ENCODE measurements at regions of chr3 and their contacts with region 1.

Region 1: DNA sequence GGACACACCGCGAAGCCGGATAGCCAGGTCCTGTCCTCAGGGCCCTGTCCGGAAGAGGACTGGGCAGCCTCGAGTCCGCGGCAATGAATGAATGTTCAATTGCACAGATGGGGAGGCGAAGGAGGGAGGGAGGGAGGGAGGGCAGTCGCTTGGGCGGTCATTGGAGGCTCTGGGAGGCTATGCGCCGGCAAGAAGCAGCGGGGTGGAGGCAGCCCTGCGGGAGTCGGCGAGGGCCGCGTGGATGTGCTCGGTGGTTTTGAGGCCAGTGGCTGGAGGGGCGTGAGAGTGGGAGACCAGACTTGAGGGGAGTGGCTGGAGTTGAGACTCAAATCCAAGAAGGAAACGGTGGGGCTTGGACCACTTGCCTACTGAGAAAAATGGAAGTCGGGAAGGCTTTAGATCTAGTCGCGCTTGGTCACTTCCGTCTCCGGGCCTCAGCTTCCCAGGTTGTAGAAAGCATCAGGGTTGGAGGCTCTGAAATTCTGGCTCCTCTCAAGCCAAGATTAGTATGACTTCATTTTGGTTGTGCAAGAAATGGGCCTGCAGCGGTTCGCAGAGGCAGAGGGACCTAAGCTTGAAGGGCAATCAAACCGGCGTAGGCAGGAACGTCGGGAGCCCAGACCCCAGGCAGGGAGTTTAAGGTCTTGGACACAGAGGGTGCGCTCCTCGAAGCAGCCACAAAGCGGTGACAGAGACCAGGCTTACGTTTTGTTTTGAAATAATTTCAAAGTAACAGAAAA is 21.1 kb upstream of the PLXND1 start:
- DNase-seq: peak; percentile 83
- H3K4me3 Mint-ChIP-seq: peak overlapping the region; percentile 92
- H3K27ac Mint-ChIP-seq: peak overlapping the region; percentile 65
- H3K4me1 Mint-ChIP-seq: peaks cover 10% of the 10 kb centered on the region
- H3K27me3 Mint-ChIP-seq: no peaks in the 10 kb centered on the region

Region 2: GRCh38 chr3:129490242-129491045 is 137.2 kb before region 1 on chr3:
- CTCF ChIA-PET with region 1: interaction called, 5 read pairs
- intact Hi-C with region 1: loop called (anchors 1 kb)
- DNase-seq: peak; percentile 67
- H3K4me3 Mint-ChIP-seq: no peak overlapping the region
- H3K27ac Mint-ChIP-seq: no peak overlapping the region
- H3K4me1 Mint-ChIP-seq: no peaks in the 10 kb centered on the region
- H3K27me3 Mint-ChIP-seq: no peaks in the 10 kb centered on the region

Region 3: GRCh38 chr3:129606636-129607390 is 20.8 kb before region 1 on chr3 and contains the start of gene PLXND1:
- CTCF ChIA-PET with region 1: interaction called, 3 read pairs
- intact Hi-C with region 1: loop called (anchors 1 kb)
- DNase-seq: peak; percentile 27
- H3K4me3 Mint-ChIP-seq: peak within 1 kb of the TSS; percentile 77
- H3K27ac Mint-ChIP-seq: peak within 1 kb of the TSS; percentile 6
- H3K4me1 Mint-ChIP-seq: peaks cover 7% of the 10 kb centered on the region
- H3K27me3 Mint-ChIP-seq: peaks cover 19% of the 10 kb centered on the region
- total RNA-seq, gene PLXND1: 5.1 to 6.2 TPM

Region 4: DNA sequence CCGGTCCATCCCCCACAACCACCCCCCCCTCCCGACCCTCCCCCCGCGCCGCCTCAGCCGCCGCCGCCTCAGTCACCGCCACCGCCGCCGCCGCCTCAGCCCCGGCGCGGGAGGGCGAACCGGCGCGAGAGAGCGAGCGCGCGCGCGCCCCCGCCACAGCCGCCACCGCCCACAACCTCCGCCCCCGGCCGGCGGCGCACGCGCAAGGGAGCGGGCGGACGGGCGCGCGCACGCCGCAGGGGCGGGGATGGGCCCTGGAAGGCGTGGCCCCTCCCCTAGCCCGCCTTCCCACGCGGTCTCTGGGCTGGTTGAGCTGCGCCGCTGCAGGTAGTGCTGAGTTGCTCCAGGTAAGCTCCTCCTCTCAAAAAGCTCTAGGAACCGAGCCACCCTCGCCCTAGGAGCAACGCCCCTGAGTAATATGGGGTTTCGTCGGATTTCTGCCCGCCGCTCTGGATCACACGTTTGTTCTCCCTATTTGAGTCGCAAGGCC is 266.0 kb after region 1 on chr3 and contains the start of gene TMCC1:
- CTCF ChIA-PET with region 1: interaction called, 3 read pairs
- intact Hi-C with region 1: loop called (anchors 1 kb)
- DNase-seq: peak; percentile 87
- H3K4me3 Mint-ChIP-seq: peak within 1 kb of the TSS; percentile 92
- H3K27ac Mint-ChIP-seq: peak within 1 kb of the TSS; percentile 70
- H3K4me1 Mint-ChIP-seq: peaks cover 38% of the 10 kb centered on the region
- H3K27me3 Mint-ChIP-seq: no peaks in the 10 kb centered on the region
- total RNA-seq, gene TMCC1: 13.6 to 14.3 TPM

Region 5: GRCh38 chr3:129934234-129935123 is 306.9 kb after region 1 on chr3:
- CTCF ChIA-PET with region 1: interaction called, 3 read pairs
- intact Hi-C with region 1: loop called (anchors 1 kb)
- DNase-seq: peak; percentile 38
- H3K4me3 Mint-ChIP-seq: no peak overlapping the region
- H3K27ac Mint-ChIP-seq: no peak overlapping the region
- H3K4me1 Mint-ChIP-seq: peaks cover 2% of the 10 kb centered on the region
- H3K27me3 Mint-ChIP-seq: no peaks in the 10 kb centered on the region

Region 6: DNA sequence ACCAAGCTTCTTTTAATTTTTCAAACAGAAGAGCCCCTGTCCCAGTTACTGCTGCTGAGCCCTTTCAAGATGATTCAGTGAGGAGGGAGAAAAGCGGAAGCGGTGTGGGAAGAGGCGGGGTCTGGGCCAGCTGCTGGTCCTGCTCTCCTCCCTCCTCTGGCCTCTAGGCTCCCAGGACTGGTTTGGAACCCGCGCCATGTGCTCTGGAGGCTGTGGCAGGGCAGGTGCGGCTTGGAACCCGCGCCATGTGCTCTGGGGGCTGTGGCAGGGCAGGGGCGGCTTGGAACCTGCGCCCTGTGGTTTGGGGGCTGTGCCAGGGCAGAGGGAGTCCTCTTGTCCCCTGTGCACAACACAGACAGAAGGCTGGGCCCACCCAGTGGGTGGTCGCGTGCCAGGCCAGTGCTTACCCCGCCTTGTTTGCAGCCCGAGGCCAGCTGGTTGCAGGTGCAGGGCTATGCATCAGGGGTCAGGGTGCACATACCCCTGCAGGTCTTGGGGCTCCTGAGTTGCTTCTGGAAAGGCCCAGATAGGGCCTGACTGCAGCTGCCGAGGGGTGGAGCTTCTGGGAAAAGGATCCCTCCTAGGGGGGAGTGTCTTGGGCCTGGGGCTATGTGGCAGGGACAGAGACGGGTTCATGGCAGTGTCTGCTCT is 466.3 kb after region 1 on chr3:
- CTCF ChIA-PET with region 1: no interaction called
- intact Hi-C with region 1: loop called (anchors 5 kb)
- DNase-seq: peak; percentile 68
- H3K4me3 Mint-ChIP-seq: peak overlapping the region; percentile 39
- H3K27ac Mint-ChIP-seq: no peak overlapping the region
- H3K4me1 Mint-ChIP-seq: peaks cover 23% of the 10 kb centered on the region
- H3K27me3 Mint-ChIP-seq: no peaks in the 10 kb centered on the region

Region 7: DNA sequence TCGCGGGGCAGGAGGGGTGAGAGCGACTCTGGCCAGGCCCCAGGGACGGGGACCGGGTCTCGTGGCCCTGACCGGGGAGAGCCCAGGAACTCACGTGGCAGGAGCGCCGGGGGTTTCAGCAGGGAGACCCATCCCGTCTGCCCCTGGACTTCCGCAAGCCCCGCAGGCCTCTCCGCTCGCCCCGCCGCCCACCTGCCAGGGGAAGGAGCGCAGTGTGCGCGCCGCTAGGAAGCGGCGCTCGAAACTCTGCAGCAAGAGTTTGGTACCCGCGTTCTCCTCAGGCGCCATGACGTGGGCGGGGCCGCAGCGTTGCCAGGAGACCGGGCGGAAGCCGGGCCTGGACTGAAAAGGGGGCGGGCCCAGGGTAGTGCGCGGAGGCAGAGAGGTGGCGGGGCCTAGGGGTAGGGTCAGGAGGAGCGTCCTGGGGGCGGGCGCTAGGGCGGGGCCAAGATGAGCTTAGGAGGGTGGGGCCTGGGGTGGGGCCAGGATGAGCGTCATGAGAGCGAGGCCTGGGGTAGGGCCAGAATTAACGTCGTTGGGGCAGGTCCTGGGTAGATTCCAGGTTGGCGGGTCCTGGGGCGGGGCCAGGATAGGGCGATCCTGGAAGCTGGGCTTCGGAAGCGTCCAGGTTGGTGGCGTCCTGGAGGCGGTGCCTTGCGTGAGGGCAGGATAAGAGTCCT is 483.7 kb after region 1 on chr3:
- CTCF ChIA-PET with region 1: interaction called, 3 read pairs
- intact Hi-C with region 1: loop called (anchors 5 kb)
- DNase-seq: peak; percentile 99
- H3K4me3 Mint-ChIP-seq: peak overlapping the region; percentile 92
- H3K27ac Mint-ChIP-seq: peak overlapping the region; percentile 95
- H3K4me1 Mint-ChIP-seq: peaks cover 18% of the 10 kb centered on the region
- H3K27me3 Mint-ChIP-seq: no peaks in the 10 kb centered on the region